Mammary epithelial cell (primary cell): ENCODE measurements at regions of chr3 and their contacts with region 1.

Region 1: DNA sequence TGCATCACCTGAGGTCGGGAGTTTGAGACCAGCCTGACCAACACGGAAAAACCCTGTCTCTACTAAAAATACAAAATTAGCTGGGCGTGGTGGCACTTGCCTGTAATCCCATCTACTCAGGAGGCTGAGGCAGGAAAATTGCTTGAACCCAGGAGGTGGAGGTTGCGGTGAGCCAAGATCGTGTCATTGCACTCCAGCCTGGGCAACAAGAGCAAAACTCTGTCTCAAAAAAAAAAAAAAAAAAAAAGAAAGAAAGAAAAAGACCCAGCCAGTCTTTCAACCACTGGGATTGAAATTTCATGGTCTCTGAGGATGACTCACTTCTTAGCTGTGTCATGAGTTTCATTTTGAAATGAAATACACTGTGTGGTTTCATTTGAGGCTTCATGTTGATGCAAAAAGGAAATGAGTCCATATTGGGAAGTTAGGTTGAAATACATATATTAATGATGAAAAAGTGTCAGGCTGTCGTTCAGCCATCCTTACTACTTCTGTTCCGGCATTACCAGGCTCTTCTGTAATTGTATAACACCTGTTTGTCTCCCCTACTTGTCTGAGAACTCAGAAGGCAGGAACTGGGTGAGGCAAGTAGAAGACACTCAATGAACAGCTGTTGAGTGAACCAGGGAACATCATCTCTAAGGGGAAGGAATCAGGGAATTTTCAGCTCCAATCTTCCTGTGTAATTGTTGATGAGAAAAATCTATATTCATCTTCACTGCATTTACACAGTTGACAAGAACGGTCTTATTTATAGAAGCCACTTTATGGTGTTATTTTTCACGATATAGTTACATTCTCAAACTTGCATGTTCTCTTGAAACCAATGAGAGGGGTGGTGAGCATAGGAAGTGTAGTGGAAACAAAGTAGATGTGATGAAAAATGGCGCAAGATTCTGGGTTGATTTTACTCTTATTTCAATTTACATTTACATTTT is 87.4 kb downstream of the NFKBIZ start:
- DNase-seq: peak; percentile 94
- H3K4me3 ChIP-seq: no peak overlapping the region
- H3K27ac ChIP-seq: peak overlapping the region; percentile 94
- H3K4me1 ChIP-seq: peaks cover 23% of the 10 kb centered on the region
- H3K27me3 ChIP-seq: no peaks in the 10 kb centered on the region
- CTCF ChIP-seq: no peak

Region 2: GRCh38 chr3:101861212-101861788 is 75.4 kb before region 1 on chr3:
- CTCF ChIA-PET with region 1: no interaction called
- dilution Hi-C with region 1: no loop called
- in situ Hi-C with region 1: no loop called
- intact Hi-C with region 1: loop called (anchors 5 kb)
- DNase-seq: no peak
- H3K4me3 ChIP-seq: no peak overlapping the region
- H3K27ac ChIP-seq: no peak overlapping the region
- H3K4me1 ChIP-seq: no peaks in the 10 kb centered on the region
- H3K27me3 ChIP-seq: no peaks in the 10 kb centered on the region
- CTCF ChIP-seq: no peak

Region 3: DNA sequence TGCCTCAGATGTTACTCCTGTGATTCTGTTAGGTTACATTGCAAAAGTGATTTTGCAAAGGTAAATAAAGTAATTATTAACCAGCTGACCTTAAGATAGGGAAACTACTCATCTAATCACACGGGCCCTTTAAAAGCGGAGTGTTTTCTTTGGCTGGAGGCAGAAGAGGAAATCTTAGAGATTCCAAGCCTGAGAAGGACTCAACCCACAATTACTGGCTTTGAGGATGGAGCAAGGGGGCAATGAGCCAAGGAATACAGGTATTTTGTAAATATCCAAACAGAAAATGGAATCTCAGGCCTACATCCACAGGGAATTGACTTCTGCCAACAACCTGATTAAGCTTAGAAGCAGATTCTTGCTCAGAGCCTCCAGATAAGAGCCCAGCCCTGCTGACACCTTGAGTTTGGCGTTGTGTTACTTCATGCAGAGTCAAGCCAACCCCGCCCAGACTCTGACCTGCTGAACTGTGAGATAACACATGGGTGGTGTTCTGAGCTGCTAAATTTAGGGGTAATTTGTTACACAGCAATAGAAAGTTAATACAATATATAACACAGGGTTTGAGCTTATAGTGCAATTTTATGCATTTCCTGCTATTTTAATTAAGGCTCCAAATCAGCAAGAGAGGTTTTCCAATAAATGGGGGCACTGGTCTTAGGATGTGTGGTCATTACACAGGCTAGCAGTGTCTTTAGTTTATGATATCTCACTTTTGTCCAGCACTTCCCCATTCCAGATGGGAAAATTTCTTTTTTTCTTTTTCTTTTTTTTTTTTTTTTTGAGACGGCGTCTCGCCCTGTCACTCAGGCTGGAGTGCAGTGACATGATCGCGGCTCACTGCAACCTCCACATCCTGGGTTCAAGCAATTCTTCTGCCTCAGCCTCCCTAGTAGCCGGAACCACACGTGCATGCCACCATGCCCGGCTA is 67.9 kb before region 1 on chr3:
- CTCF ChIA-PET with region 1: interaction called, 34 read pairs
- dilution Hi-C with region 1: no loop called
- in situ Hi-C with region 1: no loop called
- intact Hi-C with region 1: loop called (anchors 5 kb)
- DNase-seq: no peak
- H3K4me3 ChIP-seq: no peak overlapping the region
- H3K27ac ChIP-seq: no peak overlapping the region
- H3K4me1 ChIP-seq: peaks cover 7% of the 10 kb centered on the region
- H3K27me3 ChIP-seq: no peaks in the 10 kb centered on the region
- CTCF ChIP-seq: no peak

Region 4: GRCh38 chr3:101902041-101902440 is 34.6 kb before region 1 on chr3:
- CTCF ChIA-PET with region 1: no interaction called
- dilution Hi-C with region 1: no loop called
- in situ Hi-C with region 1: no loop called
- intact Hi-C with region 1: loop called (anchors 2 kb)
- DNase-seq: peak; percentile 98
- H3K4me3 ChIP-seq: no peak overlapping the region
- H3K27ac ChIP-seq: peak overlapping the region; percentile 78
- H3K4me1 ChIP-seq: peaks cover 6% of the 10 kb centered on the region
- H3K27me3 ChIP-seq: no peaks in the 10 kb centered on the region
- CTCF ChIP-seq: no peak

Region 5: DNA sequence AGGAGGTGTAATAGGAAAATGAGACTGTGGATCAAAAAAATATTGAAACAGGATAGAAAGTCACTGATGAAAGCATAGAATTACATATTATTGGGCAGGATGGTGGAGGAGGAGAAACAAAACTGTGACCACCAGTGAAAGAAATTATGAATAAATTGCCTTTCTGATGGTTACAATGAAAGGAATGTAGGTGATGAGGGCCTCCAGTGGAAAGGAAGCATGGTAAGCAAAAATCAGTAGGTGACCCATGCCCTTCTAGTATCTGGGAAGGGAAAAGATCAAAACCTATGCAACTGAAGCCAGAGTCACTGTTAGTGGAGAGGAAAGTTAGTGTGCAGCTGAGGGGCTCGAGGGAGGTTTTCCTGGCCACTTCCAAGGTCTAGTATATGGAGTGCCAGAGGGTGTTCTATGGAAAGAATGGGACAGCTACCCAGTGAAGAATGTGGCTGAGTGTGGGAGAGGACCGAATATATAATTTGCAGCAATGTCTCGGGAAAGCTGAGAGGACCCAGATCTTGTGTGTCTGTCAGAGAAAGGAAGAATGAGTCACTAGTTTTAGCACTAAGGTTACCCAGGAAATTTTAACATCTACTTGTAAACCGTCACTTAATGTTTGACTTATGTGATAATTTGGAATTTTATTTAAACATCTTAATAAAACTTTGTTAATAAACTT is 58.8 kb after region 1 on chr3:
- CTCF ChIA-PET with region 1: no interaction called
- dilution Hi-C with region 1: no loop called
- in situ Hi-C with region 1: no loop called
- intact Hi-C with region 1: loop called (anchors 2 kb)
- DNase-seq: no peak
- H3K4me3 ChIP-seq: no peak overlapping the region
- H3K27ac ChIP-seq: no peak overlapping the region
- H3K4me1 ChIP-seq: peaks cover 30% of the 10 kb centered on the region
- H3K27me3 ChIP-seq: no peaks in the 10 kb centered on the region
- CTCF ChIP-seq: no peak

Region 6: DNA sequence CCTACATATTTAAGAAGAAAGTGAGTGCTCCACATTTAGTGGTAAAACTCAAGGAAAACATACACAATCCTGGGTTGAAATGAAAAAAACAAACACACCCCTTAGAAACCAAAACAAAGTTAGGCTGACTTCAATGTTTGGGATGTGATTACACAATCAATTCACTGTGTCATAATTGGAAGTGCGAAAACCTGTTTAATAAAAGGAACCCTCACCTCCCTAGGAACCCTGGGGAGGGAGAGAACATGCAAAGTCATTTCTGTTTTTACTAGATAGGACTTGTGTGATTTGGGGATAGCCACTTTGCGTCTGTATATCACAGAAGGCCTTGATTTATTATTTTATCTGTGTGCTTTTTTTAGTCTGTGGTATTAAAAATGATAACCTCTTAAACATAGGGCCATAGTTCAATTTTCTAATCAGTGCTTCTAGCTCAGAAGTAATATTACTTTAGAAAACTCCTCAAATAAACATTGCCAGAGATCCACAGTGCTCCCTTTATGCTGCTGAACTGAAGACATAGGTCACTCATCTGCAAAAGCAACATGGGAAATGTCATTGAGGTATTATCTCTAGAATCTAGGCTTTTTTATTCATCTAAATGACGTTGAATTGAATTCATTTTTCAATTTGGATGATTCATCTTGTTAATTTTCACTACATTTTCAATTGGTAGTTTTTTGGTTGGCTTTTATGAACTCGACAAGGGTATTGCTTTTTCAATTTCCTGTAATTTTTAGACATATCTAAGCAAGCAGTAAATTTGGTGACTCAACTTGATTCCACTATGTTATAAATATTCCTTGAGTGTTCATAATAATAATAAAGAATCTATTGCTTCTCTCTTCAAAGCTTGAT is 187.8 kb after region 1 on chr3:
- CTCF ChIA-PET with region 1: no interaction called
- dilution Hi-C with region 1: no loop called
- in situ Hi-C with region 1: no loop called
- intact Hi-C with region 1: loop called (anchors 1 kb)
- DNase-seq: peak; percentile 94
- H3K4me3 ChIP-seq: no peak overlapping the region
- H3K27ac ChIP-seq: peak overlapping the region; percentile 99
- H3K4me1 ChIP-seq: peaks cover 19% of the 10 kb centered on the region
- H3K27me3 ChIP-seq: no peaks in the 10 kb centered on the region
- CTCF ChIP-seq: no peak

Region 7: DNA sequence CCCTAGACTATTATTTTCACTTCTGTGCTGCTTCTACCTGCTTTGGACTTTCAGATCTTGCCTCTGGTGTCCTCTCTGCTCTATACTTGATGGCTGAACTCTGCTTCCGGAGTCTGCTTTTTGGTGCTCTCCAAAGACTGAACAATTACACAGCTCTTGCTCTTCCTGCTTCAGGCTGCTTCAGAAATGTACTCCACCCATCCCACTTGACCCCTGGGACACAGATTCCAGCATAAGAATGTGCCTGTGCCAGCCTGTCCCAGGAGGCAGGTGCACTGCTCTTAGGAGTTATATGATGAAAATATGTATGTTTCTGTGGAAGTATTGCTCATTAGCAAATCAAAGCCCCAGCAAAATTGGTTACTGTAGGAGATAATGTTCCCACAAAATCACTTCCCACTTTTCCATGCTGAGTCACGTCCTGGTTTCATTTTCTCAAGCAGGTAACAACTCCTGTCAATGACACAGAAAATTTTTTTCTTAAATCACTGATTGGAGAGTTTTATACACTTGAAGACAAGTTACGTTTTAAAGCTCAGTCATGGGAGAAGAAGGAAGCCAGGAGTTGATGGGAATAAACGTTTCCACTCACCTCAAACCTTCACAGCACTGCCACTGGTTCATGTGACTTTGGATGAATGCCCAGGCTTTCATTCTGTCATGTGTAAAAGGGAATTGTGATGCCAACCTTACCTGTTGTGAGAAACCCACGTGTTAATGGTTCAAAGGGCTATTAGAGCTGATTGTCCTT is 258.7 kb after region 1 on chr3:
- CTCF ChIA-PET with region 1: no interaction called
- dilution Hi-C with region 1: no loop called
- in situ Hi-C with region 1: no loop called
- intact Hi-C with region 1: loop called (anchors 1 kb)
- DNase-seq: peak; percentile 96
- H3K4me3 ChIP-seq: no peak overlapping the region
- H3K27ac ChIP-seq: peak overlapping the region; percentile 94
- H3K4me1 ChIP-seq: peaks cover 62% of the 10 kb centered on the region
- H3K27me3 ChIP-seq: no peaks in the 10 kb centered on the region
- CTCF ChIP-seq: no peak